Naive thymus-derived CD4-positive, alpha-beta T cell (primary cell): ENCODE measurements at regions of chr18 and their contacts with region 1.

Region 1: GRCh38 chr18:45690975-45691815 is 32.8 kb upstream of the SLC14A1 start:
- DNase-seq: peak; percentile 42 to 80 (median 70)
- ATAC-seq: peak; percentile 30
- H3K4me3 ChIP-seq: no peak overlapping the region
- H3K4me3 Mint-ChIP-seq: peak overlapping the region in 3 of 10 donors; percentile 19 to 60 (median 31)
- H3K27ac ChIP-seq: no peak overlapping the region
- H3K27ac Mint-ChIP-seq: peak overlapping the region in 2 of 9 donors; percentile 14 to 15
- H3K4me1 ChIP-seq: peaks cover 38 to 42% of the 10 kb centered on the region in 2 donors
- H3K4me1 Mint-ChIP-seq: peaks cover 29 to 53% (median 43%) of the 10 kb centered on the region in 7 donors
- H3K27me3 ChIP-seq: no peaks in the 10 kb centered on the region
- H3K27me3 Mint-ChIP-seq: peaks cover 0 to 58% (median 5%) of the 10 kb centered on the region in 5 donors

Region 2: DNA sequence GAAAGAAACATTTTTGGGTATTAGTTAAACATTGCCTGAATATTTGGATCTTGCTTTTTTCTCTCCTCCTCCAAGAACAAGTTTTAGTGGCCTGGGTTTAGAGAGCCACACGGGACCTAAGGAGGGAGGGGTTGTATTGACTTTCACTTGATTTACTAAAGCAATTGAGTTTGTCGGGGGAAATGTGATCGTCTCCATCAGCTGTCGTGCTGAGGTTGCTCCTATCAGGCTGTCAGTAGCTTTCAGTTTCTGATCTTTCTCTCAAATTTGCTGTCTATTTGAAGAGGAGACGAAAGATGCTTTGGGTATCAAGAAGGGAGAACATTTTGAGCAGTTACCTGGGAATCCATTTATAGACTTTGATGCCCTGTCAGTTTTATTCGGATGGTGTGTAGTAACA is 904.5 kb before region 1 on chr18:
- CTCF ChIA-PET with region 1: no interaction called
- POLR2A ChIA-PET with region 1: no interaction called
- intact Hi-C with region 1: no loop called
- DNase-seq: no peak
- ATAC-seq: no peak
- H3K4me3 ChIP-seq: no peak overlapping the region
- H3K4me3 Mint-ChIP-seq: peak overlapping the region in 1 of 10 donors; percentile 6
- H3K27ac ChIP-seq: no peak overlapping the region
- H3K27ac Mint-ChIP-seq: no peak overlapping the region
- H3K4me1 ChIP-seq: no peaks in the 10 kb centered on the region
- H3K4me1 Mint-ChIP-seq: peaks cover 0 to 3% (median 0%) of the 10 kb centered on the region in 7 donors
- H3K27me3 ChIP-seq: no peaks in the 10 kb centered on the region
- H3K27me3 Mint-ChIP-seq: peaks cover 0 to 18% (median 0%) of the 10 kb centered on the region in 5 donors

Region 3: DNA sequence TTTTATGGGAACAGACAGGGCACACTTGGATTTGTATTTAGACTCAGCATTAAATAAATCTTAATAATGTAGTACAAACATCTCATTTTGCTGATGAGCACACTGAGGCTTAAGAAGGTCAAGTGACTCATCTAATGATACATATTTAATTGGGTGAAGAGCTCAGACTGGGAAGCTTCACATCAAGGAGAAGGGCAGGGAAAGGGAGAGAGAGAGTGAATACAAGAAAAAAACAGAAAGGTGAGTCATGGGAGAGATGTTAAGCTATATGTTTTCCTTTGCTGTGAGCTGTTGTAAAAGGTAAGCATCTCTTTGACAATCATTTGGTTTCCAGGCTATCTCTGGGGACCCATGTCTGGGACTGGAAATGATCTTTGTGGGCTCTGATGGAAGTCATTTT is 732.7 kb before region 1 on chr18:
- CTCF ChIA-PET with region 1: no interaction called
- POLR2A ChIA-PET with region 1: no interaction called
- intact Hi-C with region 1: no loop called
- DNase-seq: no peak
- ATAC-seq: no peak
- H3K4me3 ChIP-seq: no peak overlapping the region
- H3K4me3 Mint-ChIP-seq: no peak overlapping the region
- H3K27ac ChIP-seq: no peak overlapping the region
- H3K27ac Mint-ChIP-seq: no peak overlapping the region
- H3K4me1 ChIP-seq: no peaks in the 10 kb centered on the region
- H3K4me1 Mint-ChIP-seq: peaks cover 0 to 3% (median 0%) of the 10 kb centered on the region in 7 donors
- H3K27me3 ChIP-seq: no peaks in the 10 kb centered on the region
- H3K27me3 Mint-ChIP-seq: peaks cover 0 to 7% (median 0%) of the 10 kb centered on the region in 5 donors

Region 4: DNA sequence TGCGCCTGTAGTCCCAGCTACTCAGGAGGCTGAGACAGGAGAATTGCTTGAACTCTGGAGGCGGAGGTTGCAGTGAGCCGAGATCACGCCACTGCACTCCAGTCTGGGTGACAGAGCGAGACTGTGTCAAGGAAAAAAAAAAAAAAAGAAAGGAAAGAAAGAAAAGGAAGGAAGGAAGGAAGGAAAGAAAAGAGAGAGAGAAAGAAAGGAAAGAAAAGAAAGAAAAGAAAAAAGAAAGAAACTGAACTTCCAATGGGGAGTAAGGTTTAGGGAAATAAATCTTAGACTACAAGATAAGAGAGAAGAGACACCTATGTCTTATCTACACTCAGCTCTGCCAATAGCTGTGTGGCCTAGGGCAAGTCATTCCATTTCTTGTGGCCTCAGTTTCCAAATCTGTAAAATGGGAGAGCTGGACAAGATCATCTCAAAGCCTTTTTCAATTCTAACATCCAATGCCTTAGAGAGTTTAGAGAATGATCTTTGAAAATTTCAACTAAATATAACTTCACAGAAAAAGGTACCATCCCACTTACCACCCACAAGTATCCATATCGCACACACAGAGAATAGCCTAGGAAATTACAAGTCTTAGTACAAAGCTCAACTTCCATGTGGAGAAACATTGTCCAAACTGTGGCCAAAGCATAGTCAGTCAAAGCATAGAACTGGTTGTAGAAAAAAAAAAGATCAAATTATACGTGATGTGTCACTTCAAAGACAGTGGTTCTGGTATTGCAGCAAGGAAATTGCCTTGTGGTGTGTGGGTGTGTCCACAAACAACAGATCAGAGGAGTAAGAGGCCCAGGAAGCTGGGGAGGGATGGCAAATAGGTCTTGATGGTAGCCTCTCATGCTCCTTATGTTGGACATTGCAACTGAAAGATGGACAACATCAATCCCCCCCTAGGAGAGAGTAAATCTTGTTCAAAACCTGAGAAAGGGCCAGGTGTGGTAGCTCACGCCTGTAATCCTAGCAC is 33.5 kb before region 1 on chr18:
- CTCF ChIA-PET with region 1: interaction called, 102 read pairs
- POLR2A ChIA-PET with region 1: interaction called, 120 read pairs
- intact Hi-C with region 1: no loop called
- DNase-seq: peak in 5 of 9 donors; percentile 37 to 59 (median 50)
- ATAC-seq: peak; percentile 81
- H3K4me3 ChIP-seq: no peak overlapping the region
- H3K4me3 Mint-ChIP-seq: peak overlapping the region in 9 of 10 donors; percentile 10 to 74 (median 35)
- H3K27ac ChIP-seq: no peak overlapping the region
- H3K27ac Mint-ChIP-seq: peak overlapping the region in 6 of 9 donors; percentile 0 to 71 (median 25)
- H3K4me1 ChIP-seq: peaks cover 12 to 14% of the 10 kb centered on the region in 2 donors
- H3K4me1 Mint-ChIP-seq: peaks cover 15 to 48% (median 27%) of the 10 kb centered on the region in 7 donors
- H3K27me3 ChIP-seq: no peaks in the 10 kb centered on the region
- H3K27me3 Mint-ChIP-seq: peaks cover 0 to 5% (median 0%) of the 10 kb centered on the region in 5 donors

Region 5: DNA sequence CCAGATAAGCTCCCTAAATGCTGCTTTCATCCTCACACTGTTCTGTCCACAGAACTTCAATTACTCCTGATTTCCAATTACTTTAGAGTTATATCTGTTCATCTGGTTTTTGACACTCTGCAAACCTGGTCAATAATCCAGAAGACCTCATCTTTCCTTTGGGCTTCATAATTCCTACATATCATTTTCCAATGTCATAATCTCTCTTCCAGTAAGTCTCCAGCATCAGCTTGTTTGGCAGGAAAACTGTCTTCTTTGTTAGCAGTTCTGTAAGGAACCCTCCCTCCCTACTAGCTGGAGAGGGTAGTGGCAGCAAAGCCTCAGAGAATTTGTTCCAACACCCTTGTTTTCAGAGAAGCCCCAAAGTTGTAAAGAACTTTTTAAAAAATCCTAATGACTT is 20.9 kb after region 1 on chr18:
- CTCF ChIA-PET with region 1: no interaction called
- POLR2A ChIA-PET with region 1: no interaction called
- intact Hi-C with region 1: no loop called
- DNase-seq: no peak
- ATAC-seq: no peak
- H3K4me3 ChIP-seq: no peak overlapping the region
- H3K4me3 Mint-ChIP-seq: no peak overlapping the region
- H3K27ac ChIP-seq: no peak overlapping the region
- H3K27ac Mint-ChIP-seq: no peak overlapping the region
- H3K4me1 ChIP-seq: no peaks in the 10 kb centered on the region
- H3K4me1 Mint-ChIP-seq: peaks cover 0 to 5% (median 0%) of the 10 kb centered on the region in 7 donors
- H3K27me3 ChIP-seq: no peaks in the 10 kb centered on the region
- H3K27me3 Mint-ChIP-seq: peaks cover 0 to 9% (median 0%) of the 10 kb centered on the region in 5 donors

Region 6: GRCh38 chr18:45722899-45723298 is 31.7 kb after region 1 on chr18:
- CTCF ChIA-PET with region 1: no interaction called
- POLR2A ChIA-PET with region 1: no interaction called
- intact Hi-C with region 1: loop called in 1 of 2 experiments (anchors 2 kb)
- DNase-seq: peak in 8 of 9 donors; percentile 7 to 74 (median 40)
- ATAC-seq: peak; percentile 90
- H3K4me3 ChIP-seq: no peak overlapping the region
- H3K4me3 Mint-ChIP-seq: no peak overlapping the region
- H3K27ac ChIP-seq: no peak overlapping the region
- H3K27ac Mint-ChIP-seq: no peak overlapping the region
- H3K4me1 ChIP-seq: no peaks in the 10 kb centered on the region
- H3K4me1 Mint-ChIP-seq: peaks cover 0 to 15% (median 0%) of the 10 kb centered on the region in 7 donors
- H3K27me3 ChIP-seq: no peaks in the 10 kb centered on the region
- H3K27me3 Mint-ChIP-seq: peaks cover 0 to 35% (median 0%) of the 10 kb centered on the region in 5 donors

Region 7: GRCh38 chr18:45874491-45875184 is 183.4 kb after region 1 on chr18:
- CTCF ChIA-PET with region 1: interaction called, 57 read pairs
- POLR2A ChIA-PET with region 1: interaction called, 3 read pairs
- intact Hi-C with region 1: loop called in 1 of 2 experiments (anchors 1 kb)
- DNase-seq: peak in 7 of 9 donors; percentile 31 to 63 (median 46)
- ATAC-seq: peak; percentile 88
- H3K4me3 ChIP-seq: no peak overlapping the region
- H3K4me3 Mint-ChIP-seq: peak overlapping the region in 9 of 10 donors; percentile 4 to 77 (median 49)
- H3K27ac ChIP-seq: peak overlapping the region; percentile 20
- H3K27ac Mint-ChIP-seq: peak overlapping the region in 8 of 9 donors; percentile 13 to 89 (median 62)
- H3K4me1 ChIP-seq: peaks cover 12 to 14% of the 10 kb centered on the region in 2 donors
- H3K4me1 Mint-ChIP-seq: peaks cover 18 to 30% (median 24%) of the 10 kb centered on the region in 7 donors
- H3K27me3 ChIP-seq: no peaks in the 10 kb centered on the region
- H3K27me3 Mint-ChIP-seq: no peaks in the 10 kb centered on the region

Region 8: GRCh38 chr18:45974088-45974536 is 282.9 kb after region 1 on chr18:
- CTCF ChIA-PET with region 1: no interaction called
- POLR2A ChIA-PET with region 1: no interaction called
- intact Hi-C with region 1: loop called (anchors 1 kb)
- DNase-seq: peak in 8 of 9 donors; percentile 36 to 68 (median 60)
- ATAC-seq: peak; percentile 94
- H3K4me3 ChIP-seq: no peak overlapping the region
- H3K4me3 Mint-ChIP-seq: peak overlapping the region in 4 of 10 donors; percentile 3 to 35 (median 12)
- H3K27ac ChIP-seq: no peak overlapping the region
- H3K27ac Mint-ChIP-seq: peak overlapping the region in 3 of 9 donors; percentile 13 to 77 (median 56)
- H3K4me1 ChIP-seq: peaks cover 0 to 6% of the 10 kb centered on the region in 2 donors
- H3K4me1 Mint-ChIP-seq: peaks cover 0 to 9% (median 7%) of the 10 kb centered on the region in 7 donors
- H3K27me3 ChIP-seq: no peaks in the 10 kb centered on the region
- H3K27me3 Mint-ChIP-seq: no peaks in the 10 kb centered on the region

Region 9: DNA sequence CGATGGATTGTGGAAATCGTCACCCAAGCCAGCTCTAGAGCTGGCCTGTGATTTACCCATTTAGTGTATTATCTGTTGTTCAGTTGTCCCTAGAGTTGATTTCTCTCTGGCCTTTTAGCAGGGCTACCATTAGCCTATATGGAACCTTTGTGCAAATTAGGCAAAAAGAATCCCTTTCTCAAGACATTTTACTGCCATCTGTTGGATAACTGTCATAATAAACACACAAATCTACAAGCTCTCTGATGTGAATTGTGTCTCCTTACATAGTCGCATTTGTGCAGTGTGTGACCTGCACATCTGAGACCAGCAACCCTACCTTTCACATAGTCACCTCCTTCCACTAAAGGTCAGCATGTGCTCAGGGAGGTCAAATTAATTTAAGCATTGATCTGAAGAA is 931.8 kb after region 1 on chr18:
- CTCF ChIA-PET with region 1: no interaction called
- POLR2A ChIA-PET with region 1: no interaction called
- intact Hi-C with region 1: loop called in 1 of 2 experiments (anchors 5 kb)
- DNase-seq: no peak
- ATAC-seq: no peak
- H3K4me3 ChIP-seq: peak overlapping the region; percentile 31
- H3K4me3 Mint-ChIP-seq: peak overlapping the region in 9 of 10 donors; percentile 44 to 72 (median 58)
- H3K27ac ChIP-seq: no peak overlapping the region
- H3K27ac Mint-ChIP-seq: peak overlapping the region; percentile 14 to 87 (median 78)
- H3K4me1 ChIP-seq: peaks cover 26 to 29% of the 10 kb centered on the region in 2 donors
- H3K4me1 Mint-ChIP-seq: peaks cover 21 to 51% (median 47%) of the 10 kb centered on the region in 7 donors
- H3K27me3 ChIP-seq: no peaks in the 10 kb centered on the region
- H3K27me3 Mint-ChIP-seq: peaks cover 0 to 3% (median 0%) of the 10 kb centered on the region in 5 donors